ENCODE measurements at regions of chr9 and their contacts with region 1.

Region 1: DNA sequence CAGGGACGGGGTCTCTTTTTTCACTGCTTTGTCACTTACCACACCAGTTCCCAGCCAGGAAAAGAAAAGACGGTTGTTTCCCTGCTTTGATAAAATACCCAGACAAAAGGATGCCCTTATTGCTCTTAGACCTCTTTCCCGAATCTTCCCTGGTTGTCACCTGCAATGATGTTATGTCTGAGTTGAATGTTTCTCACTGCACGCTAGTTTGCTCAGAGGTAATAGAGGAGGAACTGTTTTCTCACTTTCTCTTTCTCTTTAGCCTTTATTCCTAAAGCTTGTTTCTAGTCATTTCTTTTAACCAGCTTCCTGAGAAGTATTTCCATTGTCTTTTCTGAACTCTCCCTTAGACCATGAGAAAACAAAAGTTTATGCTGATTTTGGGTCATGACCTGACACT is 32.9 kb downstream of the ACER2 start:
- DNase-seq: no peak
- H3K4me3 Mint-ChIP-seq: peak overlapping the region; percentile 45
- H3K27ac Mint-ChIP-seq: peak overlapping the region; percentile 40
- H3K4me1 Mint-ChIP-seq: peaks cover 17% of the 10 kb centered on the region
- H3K27me3 Mint-ChIP-seq: no peaks in the 10 kb centered on the region

Region 2: DNA sequence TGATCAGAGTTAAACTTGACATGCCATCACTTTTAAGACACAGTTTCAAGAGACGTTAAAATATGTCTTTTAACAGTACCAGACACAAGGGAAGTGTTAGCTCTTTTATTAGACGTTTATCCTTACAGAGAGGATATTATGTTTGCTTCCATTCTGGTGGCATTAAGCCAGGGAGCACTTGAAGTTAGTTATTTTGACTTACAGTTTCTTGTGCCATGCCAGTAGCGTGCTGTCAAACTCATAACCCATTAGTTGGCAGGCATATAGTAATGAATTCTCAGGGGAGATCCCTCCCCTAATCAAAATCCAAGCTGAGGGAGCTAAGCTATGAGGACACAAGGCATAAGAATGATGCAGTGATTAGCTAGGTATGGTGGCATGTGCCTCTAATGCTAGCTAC is 128.2 kb before region 1 on chr9:
- CTCF ChIA-PET with region 1: no interaction called
- intact Hi-C with region 1: no loop called
- DNase-seq: no peak
- H3K4me3 Mint-ChIP-seq: no peak overlapping the region
- H3K27ac Mint-ChIP-seq: no peak overlapping the region
- H3K4me1 Mint-ChIP-seq: no peaks in the 10 kb centered on the region
- H3K27me3 Mint-ChIP-seq: no peaks in the 10 kb centered on the region

Region 3: GRCh38 chr9:19408693-19409400 is 32.9 kb before region 1 on chr9 and contains the start of gene ACER2:
- CTCF ChIA-PET with region 1: interaction called, 4 read pairs
- intact Hi-C with region 1: loop called (anchors 1 kb)
- DNase-seq: peak; percentile 94
- H3K4me3 Mint-ChIP-seq: peak within 1 kb of the TSS; percentile 87
- H3K27ac Mint-ChIP-seq: no peak within 1 kb of the TSS
- H3K4me1 Mint-ChIP-seq: peaks cover 14% of the 10 kb centered on the region
- H3K27me3 Mint-ChIP-seq: no peaks in the 10 kb centered on the region
- total RNA-seq, gene ACER2: 2.0 to 2.2 TPM